B cell (primary cell): ENCODE measurements at regions of chr2 and their contacts with region 1.

Region 1: GRCh38 chr2:144432921-144433320 is 87.0 kb downstream of the ZEB2 start:
- DNase-seq: no peak
- ATAC-seq: no peak
- H3K4me3 ChIP-seq: no peak overlapping the region
- H3K4me3 Mint-ChIP-seq: no peak overlapping the region
- H3K27ac ChIP-seq: no peak overlapping the region
- H3K27ac Mint-ChIP-seq: no peak overlapping the region
- H3K4me1 ChIP-seq: peaks cover 16 to 20% of the 10 kb centered on the region in 2 donors
- H3K4me1 Mint-ChIP-seq: peaks cover 43% of the 10 kb centered on the region
- H3K27me3 ChIP-seq: no peaks in the 10 kb centered on the region
- H3K27me3 Mint-ChIP-seq: no peaks in the 10 kb centered on the region
- CTCF ChIP-seq: no peak

Region 2: GRCh38 chr2:144419218-144419617 is 13.7 kb before region 1 on chr2:
- CTCF ChIA-PET with region 1: interaction called, 5 read pairs
- POLR2A ChIA-PET with region 1: no interaction called
- intact Hi-C with region 1: loop called (anchors 2 kb)
- DNase-seq: no peak
- ATAC-seq: no peak
- H3K4me3 ChIP-seq: no peak overlapping the region
- H3K4me3 Mint-ChIP-seq: no peak overlapping the region
- H3K27ac ChIP-seq: no peak overlapping the region
- H3K27ac Mint-ChIP-seq: no peak overlapping the region
- H3K4me1 ChIP-seq: peaks cover 10 to 17% of the 10 kb centered on the region in 2 donors
- H3K4me1 Mint-ChIP-seq: peaks cover 45% of the 10 kb centered on the region
- H3K27me3 ChIP-seq: no peaks in the 10 kb centered on the region
- H3K27me3 Mint-ChIP-seq: no peaks in the 10 kb centered on the region
- CTCF ChIP-seq: no peak